Vagina (tissue), 2 donors: ENCODE measurements at regions of chr22 and their contacts with region 1.

Region 1: GRCh38 chr22:49209452-49210195 is 618.0 kb downstream of the BRD1 start:
- DNase-seq: peak; percentile 71 to 82
- H3K4me3 ChIP-seq: no peak overlapping the region
- H3K27ac ChIP-seq: no peak overlapping the region
- H3K4me1 ChIP-seq: no peaks in the 10 kb centered on the region
- H3K27me3 ChIP-seq: no peaks in the 10 kb centered on the region
- CTCF ChIP-seq: no peak
- POLR2A ChIP-seq: no peak

Region 2: GRCh38 chr22:49753961-49754695 is 544.5 kb after region 1 on chr22:
- intact Hi-C with region 1: no loop called
- DNase-seq: peak in 1 of 2 donors; percentile 37
- H3K4me3 ChIP-seq: no peak overlapping the region
- H3K27ac ChIP-seq: no peak overlapping the region
- H3K4me1 ChIP-seq: no peaks in the 10 kb centered on the region
- H3K27me3 ChIP-seq: no peaks in the 10 kb centered on the region
- CTCF ChIP-seq: no peak
- POLR2A ChIP-seq: no peak

Region 3: GRCh38 chr22:50169774-50170341 is 960.2 kb after region 1 on chr22:
- intact Hi-C with region 1: loop called (anchors 5 kb)
- DNase-seq: no peak
- H3K4me3 ChIP-seq: peak overlapping the region; percentile 47 to 71
- H3K27ac ChIP-seq: peak overlapping the region; percentile 27
- H3K4me1 ChIP-seq: peaks cover 18% of the 10 kb centered on the region
- H3K27me3 ChIP-seq: no peaks in the 10 kb centered on the region
- CTCF ChIP-seq: no peak
- POLR2A ChIP-seq: no peak